Psoas muscle (tissue), 8 donors: ENCODE measurements at regions of chr17 and their contacts with region 1.

Region 1: GRCh38 chr17:81394921-81395599 is at the start of gene BAHCC1:
- DNase-seq: peak; percentile 100
- ATAC-seq: peak; percentile 81 to 84 (median 81)
- H3K4me3 ChIP-seq: peak within 1 kb of the TSS; percentile 76
- H3K27ac ChIP-seq: peak within 1 kb of the TSS; percentile 99
- H3K4me1 ChIP-seq: peaks cover 23% of the 10 kb centered on the region
- H3K27me3 ChIP-seq: no peaks in the 10 kb centered on the region
- CTCF ChIP-seq: no peak
- total RNA-seq, gene BAHCC1: 6.0 to 10.7 (median 7.7) TPM

Region 2: GRCh38 chr17:81253358-81254131 is 141.5 kb before region 1 on chr17:
- intact Hi-C with region 1: loop called in 1 of 2 experiments (anchors 5 kb)
- DNase-seq: peak in 1 of 2 donors; percentile 48
- ATAC-seq: peak; percentile 53 to 65 (median 54)
- H3K4me3 ChIP-seq: no peak overlapping the region
- H3K27ac ChIP-seq: no peak overlapping the region
- H3K4me1 ChIP-seq: peaks cover 18% of the 10 kb centered on the region
- H3K27me3 ChIP-seq: no peaks in the 10 kb centered on the region
- CTCF ChIP-seq: peak; percentile 83

Region 3: DNA sequence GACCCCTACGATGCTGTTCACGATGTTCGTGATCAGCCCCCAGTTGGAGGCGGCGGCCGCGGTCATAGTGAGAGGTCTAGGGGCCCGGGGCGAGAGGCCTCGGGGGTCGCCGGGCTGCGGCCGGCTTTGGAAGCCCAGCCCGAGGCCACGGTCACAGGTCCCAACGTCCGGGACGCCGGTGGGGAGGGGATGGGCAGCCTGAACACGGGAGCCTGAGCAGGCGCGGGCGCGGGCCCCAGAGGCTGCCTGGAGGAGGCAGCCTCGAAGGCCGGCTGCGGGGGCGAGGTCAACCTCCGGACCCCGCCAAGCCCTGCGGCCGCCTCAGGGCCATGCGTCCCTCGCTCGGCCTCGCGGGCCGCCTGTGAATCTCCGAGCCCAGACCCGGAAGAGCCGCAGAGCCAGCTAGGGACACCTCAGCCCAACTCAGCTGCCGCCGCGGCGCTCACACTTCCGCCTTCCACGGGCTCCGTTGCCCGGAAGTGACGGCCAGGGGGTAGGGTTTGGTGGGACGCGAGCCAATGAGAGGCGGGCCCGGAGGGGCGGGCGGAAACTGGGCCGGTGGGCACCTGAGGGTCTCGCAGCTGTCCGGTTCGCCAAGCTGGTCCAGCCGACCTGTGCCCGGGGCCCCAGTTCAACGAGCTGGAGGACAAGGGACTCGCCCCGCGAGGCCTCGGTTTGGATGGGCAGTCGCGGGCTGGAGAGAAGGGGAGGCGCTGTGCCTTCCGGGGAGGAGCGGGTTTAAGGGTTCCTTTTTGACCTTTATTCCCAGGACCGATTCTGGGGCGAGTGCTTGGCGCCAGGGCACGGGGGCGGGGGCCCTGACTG is 100.0 kb before region 1 on chr17 and contains the start of gene SLC38A10:
- intact Hi-C with region 1: loop called (anchors 5 kb)
- DNase-seq: peak; percentile 92 to 96
- ATAC-seq: peak; percentile 90 to 94 (median 92)
- H3K4me3 ChIP-seq: peak within 1 kb of the TSS; percentile 75
- H3K27ac ChIP-seq: peak within 1 kb of the TSS; percentile 96
- H3K4me1 ChIP-seq: peaks cover 37% of the 10 kb centered on the region
- H3K27me3 ChIP-seq: no peaks in the 10 kb centered on the region
- CTCF ChIP-seq: no peak
- total RNA-seq, gene SLC38A10: 16.7 to 23.9 (median 18.6) TPM

Region 4: GRCh38 chr17:81302861-81303333 is 92.2 kb before region 1 on chr17:
- intact Hi-C with region 1: loop called in 1 of 2 experiments (anchors 5 kb)
- DNase-seq: peak; percentile 51 to 80
- ATAC-seq: peak; percentile 65 to 83 (median 78)
- H3K4me3 ChIP-seq: peak overlapping the region; percentile 25
- H3K27ac ChIP-seq: no peak overlapping the region
- H3K4me1 ChIP-seq: peaks cover 5% of the 10 kb centered on the region
- H3K27me3 ChIP-seq: no peaks in the 10 kb centered on the region
- CTCF ChIP-seq: peak; percentile 25

Region 5: DNA sequence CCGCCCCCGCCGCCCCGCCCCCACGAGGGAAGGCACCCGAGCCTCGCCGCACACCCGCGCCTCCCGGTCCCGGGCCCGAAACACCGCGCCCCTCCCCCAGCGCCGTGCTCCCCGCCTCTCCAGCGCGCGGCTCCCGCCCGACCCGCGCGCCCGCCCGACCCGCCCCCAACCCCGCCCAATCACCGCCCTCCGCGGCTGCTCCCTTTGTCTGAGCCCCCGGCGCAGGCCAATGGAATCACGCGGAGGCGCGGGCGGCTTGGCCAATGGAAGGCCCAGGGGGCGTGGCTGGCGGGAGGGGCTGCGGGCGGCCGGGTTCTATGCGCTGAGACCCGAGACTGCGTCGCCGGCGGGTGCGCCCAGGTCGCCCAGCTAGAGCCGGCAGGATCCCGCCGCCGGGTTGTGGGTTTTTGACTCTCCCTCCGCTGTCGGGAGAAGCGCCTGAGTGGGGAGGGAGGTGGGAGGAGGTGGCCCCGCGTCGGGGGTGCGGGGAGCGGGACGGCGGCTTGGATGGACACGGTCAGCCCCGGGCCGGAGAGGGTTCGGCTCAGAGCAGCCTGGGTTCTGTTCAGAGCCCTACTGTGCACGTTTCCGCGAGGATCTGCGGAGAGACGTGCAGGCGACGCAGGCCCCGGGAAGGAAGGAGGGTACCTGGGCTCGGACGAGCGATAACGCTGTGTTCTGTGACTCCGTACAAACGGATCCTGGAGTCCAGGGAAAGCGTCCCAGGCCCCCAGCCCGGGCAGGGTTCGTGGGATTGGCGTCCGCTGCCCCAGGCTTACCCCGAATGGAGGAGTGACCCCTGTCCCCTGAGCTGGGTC is 48.8 kb before region 1 on chr17:
- intact Hi-C with region 1: loop called in 1 of 2 experiments (anchors 1 kb)
- DNase-seq: peak; percentile 99
- ATAC-seq: peak; percentile 72 to 79 (median 77)
- H3K4me3 ChIP-seq: peak overlapping the region; percentile 79
- H3K27ac ChIP-seq: peak overlapping the region; percentile 95
- H3K4me1 ChIP-seq: peaks cover 12% of the 10 kb centered on the region
- H3K27me3 ChIP-seq: no peaks in the 10 kb centered on the region
- CTCF ChIP-seq: no peak

Region 6: GRCh38 chr17:81484195-81484979 is 89.3 kb after region 1 on chr17:
- intact Hi-C with region 1: loop called (anchors 1 to 5 kb)
- DNase-seq: peak; percentile 90 to 95
- ATAC-seq: peak; percentile 71 to 80 (median 74)
- H3K4me3 ChIP-seq: peak overlapping the region; percentile 64
- H3K27ac ChIP-seq: peak overlapping the region; percentile 81
- H3K4me1 ChIP-seq: peaks cover 31% of the 10 kb centered on the region
- H3K27me3 ChIP-seq: no peaks in the 10 kb centered on the region
- CTCF ChIP-seq: peak; percentile 100

Region 7: DNA sequence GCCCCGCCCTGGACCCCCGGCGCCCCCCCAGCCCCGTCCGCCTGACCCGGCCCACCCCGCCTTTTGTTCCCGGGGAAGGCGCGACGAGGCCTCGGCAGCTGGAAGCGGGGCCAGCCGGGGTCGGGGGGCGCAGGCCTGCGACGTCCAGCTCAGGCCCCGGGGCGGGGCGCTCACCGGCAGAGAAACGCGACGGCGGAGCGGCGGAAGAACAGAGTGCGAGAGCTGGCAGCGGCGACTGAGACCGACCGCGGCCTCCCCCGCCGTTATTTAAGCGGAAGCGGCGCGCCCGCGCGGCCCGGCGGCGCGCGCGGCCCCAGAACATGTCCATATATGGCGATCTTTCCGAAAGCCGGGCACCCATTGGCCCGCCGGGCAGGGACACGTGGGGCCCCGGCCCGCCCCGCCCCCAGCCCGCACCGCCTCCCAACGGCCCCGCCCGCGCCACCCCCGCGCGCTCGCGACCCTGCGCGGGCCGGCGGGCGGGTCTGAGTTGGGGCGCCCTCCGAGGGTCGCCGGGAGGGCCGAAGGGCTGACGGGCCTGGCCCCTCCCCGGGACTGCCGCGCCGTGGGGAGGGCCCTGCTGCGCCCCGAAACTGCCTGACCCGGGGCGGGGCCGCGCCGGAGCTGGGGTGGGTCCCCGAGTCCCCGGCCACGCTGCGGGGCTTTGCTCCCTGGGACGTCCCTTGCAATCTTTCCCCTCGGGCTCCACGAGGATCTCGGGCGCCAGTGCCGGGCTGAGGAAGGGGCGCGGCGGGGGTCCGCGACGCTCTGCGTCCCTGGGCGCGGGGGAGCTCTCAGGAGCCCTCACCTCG is 117.7 kb after region 1 on chr17 and contains the start of gene ACTG1:
- intact Hi-C with region 1: loop called (anchors 2 kb)
- DNase-seq: peak; percentile 93 to 97
- ATAC-seq: peak; percentile 63 to 73 (median 70)
- H3K4me3 ChIP-seq: peak within 1 kb of the TSS; percentile 86
- H3K27ac ChIP-seq: peak within 1 kb of the TSS; percentile 100
- H3K4me1 ChIP-seq: peaks cover 23% of the 10 kb centered on the region
- H3K27me3 ChIP-seq: no peaks in the 10 kb centered on the region
- CTCF ChIP-seq: no peak
- total RNA-seq, gene ACTG1: 341 to 567 (median 431) TPM